K562 (cell line): ENCODE measurements at regions of chr3 and their contacts with region 1.

Region 1: DNA sequence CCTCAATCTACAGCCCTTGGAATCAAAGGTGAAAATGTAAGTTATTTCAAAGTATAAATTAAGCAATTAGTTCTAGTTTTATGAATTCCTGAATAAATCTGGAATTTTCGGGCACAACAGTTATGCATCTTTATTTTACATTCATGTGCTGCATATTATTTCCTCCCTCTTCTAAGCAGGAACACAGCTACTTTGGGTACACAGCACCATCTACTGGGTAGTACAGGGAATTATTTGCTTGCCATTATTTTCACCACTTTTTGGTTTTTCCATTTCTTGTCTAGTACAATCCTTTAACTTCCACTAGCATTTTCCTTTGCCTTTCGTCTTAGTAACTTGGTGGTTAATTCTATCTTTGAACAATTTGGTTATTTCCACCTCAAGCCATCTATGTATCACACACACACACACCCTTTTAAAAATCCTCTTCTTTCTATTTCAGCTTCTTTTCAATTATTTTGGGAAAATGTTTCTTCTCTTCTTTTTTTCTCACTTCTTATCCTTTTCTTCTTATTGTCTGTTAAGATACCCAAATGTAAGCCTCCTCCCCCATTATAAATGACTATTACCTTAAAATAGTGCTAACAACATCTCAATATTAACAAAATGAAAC is 451.0 kb downstream of the MFSD1 start:
- DNase-seq: peak; percentile 22 to 52 (median 44)
- ATAC-seq: no peak; the same call in 2 of the 3 replicates
- H3K4me3 ChIP-seq: no peak overlapping the region
- H3K27ac ChIP-seq: no peak overlapping the region
- H3K4me1 ChIP-seq: no peaks in the 10 kb centered on the region
- H3K27me3 ChIP-seq: no peaks in the 10 kb centered on the region
- CTCF ChIP-seq: peak; percentile 43 to 70 (median 65); a peak in 5 of 6 replicates
- EP300 ChIP-seq: no peak
- POLR2A ChIP-seq: no peak
- RAD21 ChIP-seq: peak; percentile 45 to 80

Region 2: DNA sequence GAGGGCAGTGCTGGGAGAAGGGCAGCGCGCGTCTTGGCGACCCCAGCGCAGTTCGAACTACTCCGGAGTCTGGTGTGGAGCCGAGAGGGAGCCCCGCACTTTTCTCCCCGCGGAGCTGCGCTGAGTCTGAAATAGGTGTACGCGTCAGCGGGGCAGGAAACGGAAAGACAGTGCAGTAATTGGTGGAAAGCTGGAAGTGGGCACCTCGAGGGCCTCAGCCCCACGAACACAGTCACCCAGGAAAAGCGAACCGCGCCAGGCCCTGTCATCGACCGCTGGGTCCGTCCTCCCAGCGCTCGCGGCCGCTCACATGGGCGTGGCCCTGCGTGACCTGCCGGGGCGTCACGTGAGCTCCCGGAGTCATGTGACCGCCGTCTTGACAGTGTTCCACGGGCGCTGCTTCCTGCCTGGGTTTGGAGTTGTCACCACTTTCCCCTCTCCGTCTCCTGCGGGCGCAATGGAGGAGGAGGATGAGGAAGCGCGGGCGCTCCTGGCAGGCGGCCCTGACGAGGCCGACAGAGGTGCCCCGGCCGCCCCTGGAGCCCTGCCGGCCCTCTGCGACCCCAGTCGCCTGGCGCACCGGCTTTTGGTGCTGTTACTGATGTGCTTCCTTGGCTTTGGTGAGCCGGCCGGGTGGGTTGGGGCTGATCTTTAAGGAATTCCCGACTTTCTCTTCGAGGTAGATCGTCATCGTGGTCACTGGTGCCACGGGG is 451.0 kb before region 1 on chr3 and contains the start of gene MFSD1:
- CTCF ChIA-PET with region 1: no interaction called
- POLR2A ChIA-PET with region 1: no interaction called
- in situ Hi-C with region 1: no loop called
- intact Hi-C with region 1: loop called (anchors 2 kb)
- DNase-seq: peak; percentile 92 to 96 (median 92)
- ATAC-seq: peak; percentile 97
- H3K4me3 ChIP-seq: peak within 1 kb of the TSS; percentile 80
- H3K27ac ChIP-seq: peak within 1 kb of the TSS; percentile 74
- H3K4me1 ChIP-seq: peaks cover 4 to 10% of the 10 kb centered on the region in 2 experiments; a peak in 4 of 5 replicates
- H3K27me3 ChIP-seq: no peaks in the 10 kb centered on the region
- CTCF ChIP-seq: no peak
- EP300 ChIP-seq: 0 out of 2 replicates have a peak, but pooled peaks have one; percentile 27
- POLR2A ChIP-seq: peak; percentile 84
- RAD21 ChIP-seq: no peak
- polyA plus RNA-seq, gene MFSD1: 8.7 to 11.4 TPM

Region 3: GRCh38 chr3:158918008-158918407 is 334.9 kb before region 1 on chr3:
- CTCF ChIA-PET with region 1: interaction called, 5 read pairs
- POLR2A ChIA-PET with region 1: no interaction called
- in situ Hi-C with region 1: no loop called
- intact Hi-C with region 1: loop called (anchors 2 kb)
- DNase-seq: peak; percentile 28 to 55 (median 34)
- ATAC-seq: peak; percentile 93
- H3K4me3 ChIP-seq: no peak overlapping the region
- H3K27ac ChIP-seq: no peak overlapping the region
- H3K4me1 ChIP-seq: no peaks in the 10 kb centered on the region
- H3K27me3 ChIP-seq: no peaks in the 10 kb centered on the region
- CTCF ChIP-seq: peak; percentile 49 to 69 (median 62)
- EP300 ChIP-seq: no peak
- POLR2A ChIP-seq: no peak
- RAD21 ChIP-seq: peak; percentile 20 to 62; a peak in 3 of 4 replicates